OCI-LY7 (cell line): ENCODE measurements at regions of chr11 and their contacts with region 1.

Region 1: GRCh38 chr11:102430158-102430836 is 22.3 kb downstream of the TMEM123 start:
- DNase-seq: peak; percentile 95
- H3K4me3 ChIP-seq: peak overlapping the region; percentile 51
- H3K27ac ChIP-seq: peak overlapping the region; percentile 98
- H3K4me1 ChIP-seq: peaks cover 66% of the 10 kb centered on the region
- CTCF ChIP-seq: 0 out of 2 replicates have a peak, but pooled peaks have one; percentile 39

Region 2: GRCh38 chr11:102390667-102391465 is 39.4 kb before region 1 on chr11:
- CTCF ChIA-PET with region 1: no interaction called
- POLR2A ChIA-PET with region 1: interaction called, 8 read pairs
- intact Hi-C with region 1: loop called (anchors 1 kb)
- DNase-seq: peak; percentile 74
- H3K4me3 ChIP-seq: no peak overlapping the region
- H3K27ac ChIP-seq: no peak overlapping the region
- H3K4me1 ChIP-seq: peaks cover 28% of the 10 kb centered on the region
- CTCF ChIP-seq: peak; percentile 95

Region 3: DNA sequence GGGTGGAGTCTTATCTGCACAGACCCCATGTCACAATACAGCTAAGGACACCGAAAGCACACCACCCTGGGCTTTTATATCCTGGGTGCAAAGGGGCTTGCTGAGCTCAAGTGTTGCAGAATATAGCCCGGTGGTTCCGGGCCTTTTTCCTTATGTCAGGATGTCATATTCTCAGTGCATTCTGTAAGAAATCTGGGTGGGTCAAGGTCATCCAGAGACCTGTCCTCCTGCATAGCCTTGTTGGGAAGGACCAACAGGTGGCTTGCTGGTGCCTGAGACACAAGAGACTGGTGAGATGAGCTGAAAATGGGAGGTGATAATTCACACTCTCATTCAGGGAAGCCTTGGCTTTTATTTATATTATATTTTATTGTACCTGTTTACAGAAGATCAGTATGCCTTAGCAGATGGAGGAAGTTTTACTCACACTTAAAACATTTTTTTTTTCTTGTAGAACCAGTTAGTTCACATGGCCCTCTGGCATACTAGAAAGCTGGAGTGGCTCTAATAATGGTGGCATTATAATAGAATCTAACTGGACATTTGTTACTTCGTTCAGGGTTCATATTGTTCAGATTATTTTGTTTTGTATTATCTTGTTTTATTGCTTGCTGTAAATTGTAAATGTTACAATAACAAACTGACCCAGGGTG is 36.9 kb after region 1 on chr11:
- CTCF ChIA-PET with region 1: no interaction called
- POLR2A ChIA-PET with region 1: interaction called, 13 read pairs
- intact Hi-C with region 1: no loop called
- DNase-seq: no peak
- H3K4me3 ChIP-seq: no peak overlapping the region
- H3K27ac ChIP-seq: no peak overlapping the region
- H3K4me1 ChIP-seq: peaks cover 74% of the 10 kb centered on the region
- CTCF ChIP-seq: no peak

Region 4: GRCh38 chr11:102476812-102477211 is 46.5 kb after region 1 on chr11:
- CTCF ChIA-PET with region 1: no interaction called
- POLR2A ChIA-PET with region 1: interaction called, 11 read pairs
- intact Hi-C with region 1: loop called (anchors 1 kb)
- DNase-seq: peak; percentile 79
- H3K4me3 ChIP-seq: no peak overlapping the region
- H3K27ac ChIP-seq: peak overlapping the region; percentile 81
- H3K4me1 ChIP-seq: peaks cover 60% of the 10 kb centered on the region
- CTCF ChIP-seq: no peak